HepG2 (cell line): ENCODE measurements at regions of chr16 and their contacts with region 1.

Region 1: DNA sequence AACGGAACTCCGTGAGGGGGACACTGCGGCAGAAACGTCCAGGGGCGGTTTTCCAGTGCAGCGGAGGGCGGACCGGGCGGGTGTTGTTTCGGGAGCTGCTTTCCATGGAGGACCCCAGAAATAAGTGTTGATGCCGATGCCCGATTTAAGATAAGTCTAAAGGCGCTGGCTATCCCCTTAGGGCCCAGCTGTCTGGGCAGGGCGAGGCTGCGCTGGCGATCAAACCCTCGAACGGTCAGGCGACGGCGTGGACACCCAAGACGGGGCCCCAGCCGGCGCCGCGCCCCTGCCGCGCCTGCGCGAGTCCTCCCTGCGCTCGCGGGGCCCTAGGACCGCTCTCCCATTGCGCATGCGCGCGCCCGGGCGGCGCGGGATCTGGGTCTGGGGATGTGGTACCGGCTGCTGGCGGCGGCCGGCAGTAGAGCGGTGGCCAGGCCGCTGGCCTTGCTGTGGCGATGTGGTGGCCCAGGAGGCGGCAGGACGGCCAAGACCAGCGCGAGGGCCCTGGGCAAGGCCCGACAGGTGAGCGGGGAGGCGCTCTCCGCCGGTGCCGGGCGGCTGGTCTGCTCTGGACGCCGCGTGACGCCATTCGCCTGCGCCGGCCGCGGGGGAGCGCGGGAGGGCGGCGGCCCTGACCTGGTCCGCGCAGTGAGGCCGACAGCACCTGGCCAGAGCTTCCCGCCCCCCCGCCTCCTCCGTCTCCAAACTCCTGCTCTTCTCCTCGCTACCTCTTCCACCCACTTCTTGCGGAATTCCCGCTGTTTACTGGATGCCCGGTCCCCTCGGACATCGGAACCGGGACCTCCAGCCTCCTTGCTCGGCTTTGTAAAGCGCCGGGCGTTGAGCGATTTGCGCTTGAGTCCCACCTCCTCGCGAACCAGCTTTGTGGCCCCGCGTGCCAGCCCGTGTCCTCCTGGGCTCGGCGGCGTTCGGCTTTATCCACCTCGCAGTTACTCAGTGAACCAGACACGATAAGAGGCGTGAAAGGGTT is 24.0 kb downstream of the DEF8 start:
- DNase-seq: peak; percentile 92
- ATAC-seq: peak; percentile 85
- H3K4me3 ChIP-seq: peak overlapping the region; percentile 76 to 96 (median 95)
- H3K27ac ChIP-seq: peak overlapping the region; percentile 88
- H3K4me1 ChIP-seq: peaks cover 49% of the 10 kb centered on the region
- H3K27me3 ChIP-seq: no peaks in the 10 kb centered on the region; a peak in 1 of 5 replicates
- CTCF ChIP-seq: peak; percentile 31; the same call in 1 of the 2 replicates
- EP300 ChIP-seq: peak in 1 of 2 experiments; percentile 47; a peak in 1 of 4 replicates
- POLR2A ChIP-seq: peak; percentile 92 to 97
- RAD21 ChIP-seq: peak; percentile 64; the same call in 1 of the 2 replicates

Region 2: GRCh38 chr16:89534252-89534756 is 438.2 kb before region 1 on chr16:
- CTCF ChIA-PET with region 1: no interaction called
- POLR2A ChIA-PET with region 1: no interaction called
- in situ Hi-C with region 1: no loop called
- intact Hi-C with region 1: no loop called
- DNase-seq: no peak
- ATAC-seq: no peak; the same call in 2 of the 3 replicates
- H3K4me3 ChIP-seq: no peak overlapping the region
- H3K27ac ChIP-seq: no peak overlapping the region
- H3K4me1 ChIP-seq: 0 out of 2 replicates have a peak, but pooled peaks cover 4% of the 10 kb centered on the region
- H3K27me3 ChIP-seq: no peaks in the 10 kb centered on the region
- CTCF ChIP-seq: no peak
- EP300 ChIP-seq: no peak
- POLR2A ChIP-seq: no peak
- RAD21 ChIP-seq: no peak

Region 3: DNA sequence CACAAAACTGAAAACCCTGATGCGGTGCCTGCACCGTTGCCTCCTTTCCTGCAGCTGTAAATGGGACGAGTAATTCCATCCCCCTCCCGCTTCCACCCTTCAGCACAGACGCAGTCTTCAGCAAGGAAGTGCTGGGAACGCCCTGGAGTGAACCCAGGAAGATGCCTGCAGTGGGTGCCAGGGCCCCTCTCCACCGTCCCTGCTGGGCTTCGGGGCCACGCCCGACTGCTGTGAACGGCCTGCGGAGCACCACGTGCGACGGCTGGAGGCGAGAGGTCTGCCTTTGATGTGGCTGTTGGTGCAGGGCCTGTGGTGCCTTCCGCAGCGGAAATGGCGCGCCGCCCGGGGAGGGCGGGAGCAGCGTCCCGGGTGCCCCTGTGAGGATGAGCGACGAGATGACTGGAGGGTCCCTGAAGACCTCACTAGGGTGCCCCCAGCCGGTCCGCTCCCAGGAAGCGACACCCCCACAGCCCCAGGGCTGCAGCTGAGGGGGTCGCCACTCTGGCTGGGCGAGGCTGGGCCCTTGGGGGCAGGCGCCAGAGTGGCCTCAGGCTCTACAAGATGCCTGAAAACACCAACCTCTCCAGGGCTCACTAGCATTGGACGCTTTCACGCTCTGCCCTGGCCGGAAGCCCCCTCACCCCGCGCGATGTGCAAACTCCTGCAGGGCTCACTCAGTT is 54.6 kb before region 1 on chr16:
- CTCF ChIA-PET with region 1: no interaction called
- POLR2A ChIA-PET with region 1: interaction called, 84 read pairs
- in situ Hi-C with region 1: no loop called
- intact Hi-C with region 1: no loop called
- DNase-seq: peak; percentile 90
- ATAC-seq: peak; percentile 54
- H3K4me3 ChIP-seq: peak overlapping the region; percentile 45 to 90 (median 49)
- H3K27ac ChIP-seq: peak overlapping the region; percentile 77
- H3K4me1 ChIP-seq: peaks cover 83% of the 10 kb centered on the region
- H3K27me3 ChIP-seq: no peaks in the 10 kb centered on the region; a peak in 1 of 5 replicates
- CTCF ChIP-seq: peak; percentile 46; the same call in 1 of the 2 replicates
- EP300 ChIP-seq: peak; percentile 57 to 72
- POLR2A ChIP-seq: no peak; a peak in 1 of 4 replicates
- RAD21 ChIP-seq: no peak; the same call in none of the 2 replicates

Region 4: GRCh38 chr16:89934611-89935553 is 37.7 kb before region 1 on chr16:
- CTCF ChIA-PET with region 1: no interaction called
- POLR2A ChIA-PET with region 1: no interaction called
- in situ Hi-C with region 1: no loop called
- intact Hi-C with region 1: no loop called
- DNase-seq: no peak
- ATAC-seq: no peak
- H3K4me3 ChIP-seq: no peak overlapping the region
- H3K27ac ChIP-seq: no peak overlapping the region
- H3K4me1 ChIP-seq: peaks cover 25% of the 10 kb centered on the region
- H3K27me3 ChIP-seq: peaks cover 0 to 14% of the 10 kb centered on the region in 2 experiments; a peak in 2 of 5 replicates
- CTCF ChIP-seq: no peak
- EP300 ChIP-seq: no peak
- POLR2A ChIP-seq: no peak
- RAD21 ChIP-seq: no peak

Region 5: GRCh38 chr16:90031931-90032687 is 59.6 kb after region 1 on chr16:
- CTCF ChIA-PET with region 1: no interaction called
- POLR2A ChIA-PET with region 1: no interaction called
- in situ Hi-C with region 1: no loop called
- intact Hi-C with region 1: no loop called
- DNase-seq: no peak
- ATAC-seq: no peak
- H3K4me3 ChIP-seq: no peak overlapping the region
- H3K27ac ChIP-seq: no peak overlapping the region
- H3K4me1 ChIP-seq: no peaks in the 10 kb centered on the region
- H3K27me3 ChIP-seq: no peaks in the 10 kb centered on the region
- CTCF ChIP-seq: no peak
- EP300 ChIP-seq: no peak
- POLR2A ChIP-seq: no peak
- RAD21 ChIP-seq: no peak